ENCODE measurements at regions of chr6 and their contacts with region 1.

Region 1: GRCh38 chr6:35139908-35140655 is 1.1 kb downstream of the TCP11 start:
- DNase-seq: no peak
- H3K4me3 ChIP-seq: no peak overlapping the region
- H3K27ac ChIP-seq: no peak overlapping the region
- H3K4me1 ChIP-seq: no peaks in the 10 kb centered on the region
- H3K27me3 ChIP-seq: no peaks in the 10 kb centered on the region
- CTCF ChIP-seq: peak; percentile 71 to 89 (median 86)
- POLR2A ChIP-seq: no peak

Region 2: GRCh38 chr6:34986845-34987246 is 153.2 kb before region 1 on chr6:
- intact Hi-C with region 1: loop called (anchors 10 kb)
- DNase-seq: peak in 1 of 2 donors; percentile 39
- H3K4me3 ChIP-seq: no peak overlapping the region
- H3K27ac ChIP-seq: no peak overlapping the region
- H3K4me1 ChIP-seq: no peaks in the 10 kb centered on the region
- H3K27me3 ChIP-seq: no peaks in the 10 kb centered on the region
- CTCF ChIP-seq: peak; percentile 86 to 90 (median 89)
- POLR2A ChIP-seq: no peak

Region 3: DNA sequence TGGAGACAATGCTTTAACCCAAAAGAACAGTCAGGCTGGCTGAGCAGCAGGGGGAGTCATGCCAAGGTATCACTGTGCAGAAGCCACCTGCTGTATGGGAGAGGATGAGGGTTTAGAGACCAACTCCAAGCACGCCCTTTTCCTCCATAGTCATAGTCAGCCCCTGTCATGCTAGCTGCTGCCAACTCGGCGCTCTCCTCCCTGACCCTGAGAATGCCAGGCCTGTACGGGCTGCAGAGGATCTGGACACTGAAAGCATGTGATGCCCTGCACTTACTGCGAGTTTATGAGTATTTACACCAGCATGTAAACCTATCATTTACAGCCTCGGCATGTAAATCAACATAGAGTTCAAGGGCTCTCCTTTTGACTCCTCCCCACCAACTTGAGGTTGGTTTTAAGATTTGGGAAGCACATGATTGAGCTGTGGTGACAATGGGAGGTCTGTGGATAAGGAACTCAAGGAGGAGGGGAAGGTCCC is 62.0 kb after region 1 on chr6:
- intact Hi-C with region 1: loop called (anchors 10 kb)
- DNase-seq: no peak
- H3K4me3 ChIP-seq: no peak overlapping the region
- H3K27ac ChIP-seq: no peak overlapping the region
- H3K4me1 ChIP-seq: peaks cover 0 to 4% of the 10 kb centered on the region in 2 donors
- H3K27me3 ChIP-seq: no peaks in the 10 kb centered on the region
- CTCF ChIP-seq: no peak
- POLR2A ChIP-seq: no peak